ENCODE measurements at regions of chr11 and their contacts with region 1.

Region 1: DNA sequence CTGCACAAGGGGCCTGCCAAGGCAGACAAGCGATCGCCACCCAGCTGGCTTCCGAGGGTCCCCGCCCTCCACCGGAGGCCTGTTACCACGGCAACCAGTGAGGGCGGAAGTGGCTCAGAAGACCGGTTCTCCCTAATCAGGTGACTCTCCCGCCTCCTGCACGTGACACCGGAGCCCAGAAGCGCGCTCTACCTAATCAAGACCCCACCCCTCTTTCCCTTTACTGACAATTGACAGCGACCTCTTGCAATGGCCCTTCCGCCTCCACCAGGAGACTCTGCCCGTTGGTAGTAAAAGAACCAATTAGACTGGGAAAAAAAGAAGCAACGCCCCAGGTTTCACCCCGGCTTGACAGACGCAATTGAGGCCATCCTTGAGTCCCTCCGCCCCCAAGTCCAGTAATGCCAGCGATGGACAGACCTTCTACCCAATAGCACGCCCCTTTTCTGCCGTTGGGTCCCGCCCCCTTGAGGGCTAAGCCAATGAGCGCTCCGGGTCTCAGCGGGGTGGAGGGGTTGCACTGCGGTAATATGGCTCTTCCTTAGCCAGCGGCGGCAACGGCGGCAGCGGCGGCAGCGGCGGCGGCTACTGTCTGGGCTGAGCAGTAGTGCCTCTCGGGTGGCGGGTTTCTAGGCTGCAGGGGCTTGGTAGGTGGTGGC is at the start of gene UVRAG:
- DNase-seq: peak; percentile 99
- H3K4me3 ChIP-seq: peak within 1 kb of the TSS; percentile 83
- H3K27ac ChIP-seq: peak within 1 kb of the TSS; percentile 76
- H3K4me1 ChIP-seq: peaks cover 15% of the 10 kb centered on the region
- H3K27me3 ChIP-seq: no peaks in the 10 kb centered on the region
- CTCF ChIP-seq: no peak
- total RNA-seq, gene UVRAG: 19.6 and 21.1 TPM in 2 replicates

Region 2: GRCh38 chr11:75850787-75851186 is 36.0 kb after region 1 on chr11:
- CTCF ChIA-PET with region 1: no interaction called
- POLR2A ChIA-PET with region 1: no interaction called
- intact Hi-C with region 1: loop called (anchors 5 kb)
- DNase-seq: peak; percentile 17
- H3K4me3 ChIP-seq: no peak overlapping the region
- H3K27ac ChIP-seq: peak overlapping the region; percentile 13
- H3K4me1 ChIP-seq: peaks cover 19% of the 10 kb centered on the region
- H3K27me3 ChIP-seq: no peaks in the 10 kb centered on the region
- CTCF ChIP-seq: no peak

Region 3: DNA sequence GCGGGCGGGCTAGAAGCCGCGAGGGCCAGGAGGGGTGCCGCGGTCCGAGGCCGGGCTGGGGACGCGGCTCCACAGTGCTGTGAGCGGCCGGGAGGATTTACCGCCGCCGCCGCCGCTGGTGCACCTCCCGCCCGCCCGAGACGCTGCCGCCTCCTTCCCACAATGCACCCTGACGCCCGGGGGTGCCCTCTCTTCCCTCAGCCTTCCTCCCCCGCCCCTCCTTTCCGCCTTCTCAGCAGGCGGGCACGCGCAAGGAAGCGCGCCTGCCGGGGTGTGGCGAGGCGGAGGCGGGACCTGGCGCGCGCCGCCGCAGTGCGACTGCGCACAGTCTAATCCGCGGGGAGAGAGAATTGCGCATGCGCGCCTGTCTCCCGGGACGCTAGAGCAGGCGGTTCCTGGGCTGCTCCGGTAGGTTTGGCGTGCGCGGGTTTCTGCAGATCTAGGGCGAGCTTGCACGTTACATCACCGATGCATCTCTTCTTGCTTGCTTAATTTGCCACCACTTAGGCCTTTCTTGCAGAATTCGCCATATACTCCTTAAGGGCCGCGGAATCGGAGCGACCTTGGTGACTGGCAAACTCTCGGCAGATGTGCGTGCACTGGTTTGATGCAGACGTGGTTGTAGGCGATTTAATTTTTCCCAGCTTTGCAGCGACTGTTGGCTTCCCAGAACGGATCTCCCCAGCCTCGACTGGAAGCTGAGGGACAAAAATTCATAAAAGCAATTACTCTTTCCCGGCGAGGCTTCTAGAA is 566.3 kb after region 1 on chr11 and contains the starts of genes GVQW3 and THAP12:
- CTCF ChIA-PET with region 1: no interaction called
- POLR2A ChIA-PET with region 1: no interaction called
- intact Hi-C with region 1: no loop called
- DNase-seq: peak; percentile 99
- H3K4me3 ChIP-seq: peak within 1 kb of the TSS; percentile 89
- H3K27ac ChIP-seq: peak within 1 kb of the TSS; percentile 82
- H3K4me1 ChIP-seq: peaks cover 23% of the 10 kb centered on the region
- H3K27me3 ChIP-seq: no peaks in the 10 kb centered on the region
- CTCF ChIP-seq: peak; percentile 34; the same call in 1 of the 2 replicates
- total RNA-seq, gene GVQW3: 6.2 and 9.9 TPM in 2 replicates
- total RNA-seq, gene THAP12: 53.1 and 55.3 TPM in 2 replicates